Sigmoid colon (tissue), 7 donors: ENCODE measurements at regions of chr5 and their contacts with region 1.

Region 1: DNA sequence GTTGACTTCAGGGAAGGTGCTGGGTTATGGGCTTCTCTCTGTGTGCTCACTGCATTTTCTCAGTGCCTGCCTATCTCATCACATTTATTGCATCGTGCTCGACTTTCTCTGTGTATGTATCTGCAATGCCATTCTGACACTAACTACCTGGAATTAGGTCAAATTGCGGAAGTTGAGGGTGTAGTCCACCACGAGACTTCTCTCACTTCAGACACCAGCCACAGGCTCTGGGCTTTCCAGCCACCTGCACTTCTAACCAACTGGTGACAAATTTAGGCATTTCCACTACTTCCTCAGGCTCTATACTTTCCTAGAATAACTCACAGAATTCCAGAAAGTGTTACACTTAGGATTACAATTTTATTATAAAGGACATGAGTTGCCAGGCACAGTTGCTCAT is 188.6 kb upstream of the ZNF608 start:
- DNase-seq: no peak
- H3K4me3 ChIP-seq: no peak overlapping the region
- H3K27ac ChIP-seq: no peak overlapping the region
- H3K4me1 ChIP-seq: peaks cover 0 to 28% (median 16%) of the 10 kb centered on the region in 4 donors
- H3K27me3 ChIP-seq: no peaks in the 10 kb centered on the region
- CTCF ChIP-seq: no peak
- EP300 ChIP-seq: no peak
- POLR2A ChIP-seq: no peak

Region 2: DNA sequence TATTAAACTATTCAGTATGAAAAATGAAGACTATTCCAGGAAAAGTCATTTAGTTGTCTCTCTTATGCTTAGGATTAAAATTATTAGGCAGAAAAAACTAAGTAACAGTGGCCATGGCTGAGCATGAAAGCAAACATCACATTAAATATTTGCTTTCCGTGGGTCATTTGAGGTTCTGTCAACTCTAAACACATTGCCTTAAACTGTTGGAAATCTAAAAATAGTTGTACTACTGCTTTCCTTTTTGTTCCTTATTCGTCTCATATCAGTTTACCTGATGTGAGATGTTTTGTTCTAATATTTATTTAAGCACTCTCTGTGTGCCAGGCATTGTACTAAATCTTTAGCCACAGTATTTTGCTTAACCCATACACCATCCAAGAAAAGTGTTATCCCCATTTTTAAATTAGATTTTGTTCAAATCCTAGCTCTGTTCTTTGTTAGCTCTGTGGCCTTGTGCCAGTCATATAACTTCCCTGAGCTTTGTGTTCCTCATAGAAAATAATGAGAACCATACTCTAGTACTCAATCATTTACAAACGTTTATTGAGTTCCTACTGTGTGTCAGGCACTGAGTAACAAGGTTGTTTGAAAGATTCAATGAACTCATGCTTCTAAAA is 170.0 kb before region 1 on chr5:
- intact Hi-C with region 1: loop called (anchors 5 kb)
- DNase-seq: no peak
- H3K4me3 ChIP-seq: no peak overlapping the region
- H3K27ac ChIP-seq: peak overlapping the region in 2 of 4 donors; percentile 36 to 46
- H3K4me1 ChIP-seq: peaks cover 0 to 7% (median 3%) of the 10 kb centered on the region in 4 donors
- H3K27me3 ChIP-seq: no peaks in the 10 kb centered on the region
- CTCF ChIP-seq: no peak
- EP300 ChIP-seq: peak in 1 of 4 donors; percentile 1
- POLR2A ChIP-seq: no peak

Region 3: GRCh38 chr5:124796495-124796894 is 138.6 kb before region 1 on chr5:
- intact Hi-C with region 1: no loop called
- DNase-seq: no peak
- H3K4me3 ChIP-seq: no peak overlapping the region
- H3K27ac ChIP-seq: no peak overlapping the region
- H3K4me1 ChIP-seq: peaks cover 0 to under 1% (median 0%) of the 10 kb centered on the region in 4 donors
- H3K27me3 ChIP-seq: no peaks in the 10 kb centered on the region
- CTCF ChIP-seq: no peak
- EP300 ChIP-seq: no peak
- POLR2A ChIP-seq: no peak

Region 4: GRCh38 chr5:124972703-124973102 is 37.6 kb after region 1 on chr5:
- intact Hi-C with region 1: no loop called
- DNase-seq: no peak
- H3K4me3 ChIP-seq: no peak overlapping the region
- H3K27ac ChIP-seq: no peak overlapping the region
- H3K4me1 ChIP-seq: no peaks in the 10 kb centered on the region
- H3K27me3 ChIP-seq: no peaks in the 10 kb centered on the region
- CTCF ChIP-seq: no peak
- EP300 ChIP-seq: no peak
- POLR2A ChIP-seq: no peak

Region 5: DNA sequence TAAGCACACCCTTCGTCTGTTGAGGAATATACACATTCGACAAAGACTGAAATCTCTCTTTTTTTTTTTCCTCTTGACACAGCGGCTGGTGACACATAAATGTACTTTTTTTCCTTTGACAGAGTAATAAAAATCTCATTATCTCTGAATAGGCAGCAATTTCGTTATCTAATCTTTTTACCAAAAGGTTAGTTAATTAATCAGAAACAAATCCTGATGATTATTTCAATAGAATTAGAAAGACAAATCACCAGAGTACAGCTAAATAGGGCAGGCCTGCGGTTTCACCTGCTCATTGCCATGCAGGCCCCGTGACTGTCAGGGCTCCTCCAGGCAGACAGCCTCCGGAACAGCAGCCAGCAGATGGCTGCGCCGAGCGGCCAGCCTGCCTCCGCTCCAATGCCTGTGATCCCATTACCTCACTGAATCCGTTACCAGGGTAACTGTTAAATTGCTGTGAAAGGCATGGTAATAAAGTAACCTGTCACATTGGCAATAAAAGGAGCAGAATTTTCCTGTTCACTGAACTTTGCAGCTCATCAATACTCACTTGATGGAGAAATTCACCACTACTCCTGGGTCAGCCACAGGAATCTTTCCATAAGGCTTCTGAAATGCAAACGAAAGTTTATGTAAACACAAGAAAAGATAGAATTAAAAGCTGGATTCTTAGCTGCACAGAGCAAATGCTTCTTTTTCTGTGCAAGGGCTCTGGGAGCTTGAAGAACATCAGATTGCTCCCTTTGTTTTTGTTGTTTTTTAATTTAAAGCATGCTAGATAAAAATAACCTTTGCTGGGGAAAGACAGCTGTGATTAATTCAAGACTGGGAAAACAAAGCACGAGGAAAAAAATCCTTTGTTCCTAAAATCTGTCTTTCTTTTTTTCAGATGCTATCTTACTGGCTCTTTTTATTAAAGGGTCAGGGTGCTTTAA is 477.8 kb after region 1 on chr5:
- intact Hi-C with region 1: loop called (anchors 5 kb)
- DNase-seq: peak; percentile 82
- H3K4me3 ChIP-seq: peak overlapping the region in 1 of 4 donors; percentile 1
- H3K27ac ChIP-seq: peak overlapping the region; percentile 66 to 84 (median 74)
- H3K4me1 ChIP-seq: peaks cover 0 to 64% (median 60%) of the 10 kb centered on the region in 4 donors
- H3K27me3 ChIP-seq: no peaks in the 10 kb centered on the region
- CTCF ChIP-seq: peak in 1 of 4 experiments; percentile 24
- EP300 ChIP-seq: peak in 1 of 4 donors; percentile 53
- POLR2A ChIP-seq: no peak